IMR-90 (cell line): ENCODE measurements at regions of chr5 and their contacts with region 1.

Region 1: GRCh38 chr5:170986598-170986997 is 124.8 kb downstream of the RANBP17 start:
- DNase-seq: peak; percentile 42
- ATAC-seq: peak; percentile 51; the same call in 1 of the 2 replicates
- H3K4me3 ChIP-seq: no peak overlapping the region
- H3K27ac ChIP-seq: no peak overlapping the region
- H3K4me1 ChIP-seq: no peaks in the 10 kb centered on the region
- H3K27me3 ChIP-seq: no peaks in the 10 kb centered on the region
- CTCF ChIP-seq: peak; percentile 45
- POLR2A ChIP-seq: no peak
- RAD21 ChIP-seq: peak; percentile 51

Region 2: DNA sequence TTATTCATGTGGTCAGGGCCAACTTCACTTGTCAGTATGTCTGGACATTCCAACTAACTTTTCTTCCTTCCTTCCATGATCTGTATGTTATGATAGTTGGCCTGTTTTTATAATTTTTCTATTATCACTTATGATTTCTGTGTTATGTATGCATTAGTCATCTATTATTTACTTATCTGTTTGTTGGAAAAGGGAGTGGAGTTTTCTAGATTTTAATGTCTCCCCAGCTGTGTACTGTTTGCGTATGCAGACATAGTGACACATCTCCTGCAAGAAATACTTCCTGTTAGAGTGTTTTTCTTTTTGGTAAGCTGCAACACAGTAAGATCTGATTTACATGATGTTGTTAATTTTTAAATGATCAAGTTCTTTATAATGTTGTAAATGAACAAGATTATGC is 997.7 kb before region 1 on chr5:
- CTCF ChIA-PET with region 1: no interaction called
- POLR2A ChIA-PET with region 1: no interaction called
- dilution Hi-C with region 1: no loop called
- in situ Hi-C with region 1: no loop called
- intact Hi-C with region 1: no loop called
- DNase-seq: peak; percentile 16
- ATAC-seq: peak; percentile 54
- H3K4me3 ChIP-seq: no peak overlapping the region
- H3K27ac ChIP-seq: no peak overlapping the region
- H3K4me1 ChIP-seq: no peaks in the 10 kb centered on the region
- H3K27me3 ChIP-seq: no peaks in the 10 kb centered on the region; the same call in 1 of the 2 replicates
- CTCF ChIP-seq: no peak
- POLR2A ChIP-seq: no peak
- RAD21 ChIP-seq: no peak

Region 3: DNA sequence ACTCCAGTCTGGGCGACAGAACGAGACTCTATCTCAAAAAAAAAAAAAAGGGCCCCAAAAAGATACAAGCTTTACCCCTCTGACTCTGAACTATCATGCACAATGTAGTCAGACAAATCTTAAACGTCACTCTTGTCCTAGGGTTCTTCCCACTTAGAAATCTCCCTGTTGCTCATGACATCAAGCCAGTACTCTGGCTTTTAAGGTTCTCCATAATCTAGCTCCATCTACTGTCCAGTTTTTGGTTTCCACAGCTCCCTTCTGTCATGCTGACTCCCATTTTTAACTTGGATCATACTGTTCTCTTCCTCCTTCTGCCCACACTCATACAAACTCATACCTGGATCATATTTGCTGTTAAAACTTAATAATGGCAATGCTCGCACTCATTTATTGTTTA is 165.8 kb after region 1 on chr5:
- CTCF ChIA-PET with region 1: interaction called, 3 read pairs
- POLR2A ChIA-PET with region 1: interaction called, 4 read pairs
- dilution Hi-C with region 1: no loop called
- in situ Hi-C with region 1: no loop called
- intact Hi-C with region 1: loop called (anchors 5 kb)
- DNase-seq: peak; percentile 54
- ATAC-seq: peak; percentile 75
- H3K4me3 ChIP-seq: no peak overlapping the region
- H3K27ac ChIP-seq: no peak overlapping the region
- H3K4me1 ChIP-seq: peaks cover 3% of the 10 kb centered on the region; the same call in 1 of the 2 replicates
- H3K27me3 ChIP-seq: no peaks in the 10 kb centered on the region
- CTCF ChIP-seq: peak; percentile 47
- POLR2A ChIP-seq: no peak
- RAD21 ChIP-seq: peak; percentile 53

Region 4: GRCh38 chr5:171770153-171770552 is 783.6 kb after region 1 on chr5:
- CTCF ChIA-PET with region 1: no interaction called
- POLR2A ChIA-PET with region 1: no interaction called
- dilution Hi-C with region 1: no loop called
- in situ Hi-C with region 1: no loop called
- intact Hi-C with region 1: no loop called
- DNase-seq: no peak
- ATAC-seq: no peak
- H3K4me3 ChIP-seq: no peak overlapping the region
- H3K27ac ChIP-seq: no peak overlapping the region
- H3K4me1 ChIP-seq: no peaks in the 10 kb centered on the region
- H3K27me3 ChIP-seq: peaks cover 9% of the 10 kb centered on the region
- CTCF ChIP-seq: no peak
- POLR2A ChIP-seq: no peak
- RAD21 ChIP-seq: no peak